HepG2 (cell line): ENCODE measurements at regions of chr2 and their contacts with region 1.

Region 1: GRCh38 chr2:9333591-9334171 is 89.6 kb downstream of the ITGB1BP1 start:
- DNase-seq: peak; percentile 84
- ATAC-seq: peak; percentile 55
- H3K4me3 ChIP-seq: no peak overlapping the region
- H3K27ac ChIP-seq: no peak overlapping the region
- H3K4me1 ChIP-seq: peaks cover 74% of the 10 kb centered on the region
- H3K27me3 ChIP-seq: no peaks in the 10 kb centered on the region
- CTCF ChIP-seq: peak; percentile 90
- EP300 ChIP-seq: no peak; a peak in 1 of 4 replicates
- POLR2A ChIP-seq: no peak
- RAD21 ChIP-seq: peak; percentile 88

Region 2: DNA sequence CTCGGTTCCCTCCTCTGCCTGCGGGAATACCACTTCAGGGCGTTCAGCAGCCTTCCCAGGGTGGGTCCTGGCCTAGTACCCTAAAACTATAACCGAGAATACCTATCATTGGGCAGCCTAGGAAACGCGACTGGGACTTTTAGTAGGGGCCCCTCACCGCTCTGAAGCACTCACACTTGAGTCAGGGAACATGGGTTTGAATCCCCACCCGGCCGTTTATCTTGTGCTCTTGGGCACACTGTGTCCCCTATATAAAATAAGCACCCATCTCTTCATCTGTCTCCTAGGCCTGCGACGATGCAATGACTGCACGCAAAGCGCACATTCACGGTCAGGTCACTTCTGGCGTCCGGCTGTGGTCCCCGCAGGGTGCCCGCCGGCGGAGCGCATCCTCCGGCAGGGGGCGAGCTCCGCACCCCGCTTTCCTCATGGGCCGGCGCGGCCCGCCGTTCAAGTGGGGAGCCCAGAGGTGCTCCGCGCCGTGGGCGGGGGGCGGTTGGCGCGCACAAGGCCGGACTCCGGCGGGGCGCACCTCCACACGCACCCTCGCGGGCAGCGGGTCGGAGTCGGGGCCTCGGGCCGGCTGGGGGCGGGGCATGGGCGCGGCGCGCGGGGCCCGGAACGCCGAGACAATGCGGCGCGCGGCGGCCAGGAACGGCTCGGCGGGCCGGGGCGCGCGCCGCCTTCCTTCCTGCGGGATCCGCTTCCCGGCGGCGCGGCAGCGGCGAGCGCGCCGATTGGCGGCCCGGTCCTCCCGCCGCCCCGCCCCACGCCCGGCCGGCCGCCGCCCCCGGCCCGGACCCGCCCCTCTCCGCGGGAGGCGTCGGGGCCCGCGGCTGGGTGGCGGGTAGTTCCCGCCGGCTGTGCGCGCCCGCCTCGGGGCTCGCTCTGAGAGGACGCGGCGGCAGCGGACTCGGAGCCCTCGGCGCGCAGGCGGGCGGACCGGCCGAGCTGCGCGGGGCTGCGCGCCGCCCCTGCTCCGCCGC is 127.4 kb before region 1 on chr2 and contains the start of gene ASAP2:
- CTCF ChIA-PET with region 1: interaction called, 4 read pairs
- POLR2A ChIA-PET with region 1: interaction called, 8 read pairs
- in situ Hi-C with region 1: loop called (anchors 10 kb)
- intact Hi-C with region 1: loop called (anchors 1 kb)
- DNase-seq: peak; percentile 59
- ATAC-seq: peak; percentile 79
- H3K4me3 ChIP-seq: peak within 1 kb of the TSS; percentile 87 to 96 (median 90)
- H3K27ac ChIP-seq: peak within 1 kb of the TSS; percentile 1
- H3K4me1 ChIP-seq: peaks cover 62% of the 10 kb centered on the region
- H3K27me3 ChIP-seq: no peaks in the 10 kb centered on the region; a peak in 1 of 5 replicates
- CTCF ChIP-seq: peak; percentile 89
- EP300 ChIP-seq: no peak
- POLR2A ChIP-seq: peak in 1 of 2 experiments; percentile 31; a peak in 1 of 4 replicates
- RAD21 ChIP-seq: peak; percentile 96
- total RNA-seq, gene ASAP2: 7.3 and 7.5 TPM in 2 replicates

Region 3: DNA sequence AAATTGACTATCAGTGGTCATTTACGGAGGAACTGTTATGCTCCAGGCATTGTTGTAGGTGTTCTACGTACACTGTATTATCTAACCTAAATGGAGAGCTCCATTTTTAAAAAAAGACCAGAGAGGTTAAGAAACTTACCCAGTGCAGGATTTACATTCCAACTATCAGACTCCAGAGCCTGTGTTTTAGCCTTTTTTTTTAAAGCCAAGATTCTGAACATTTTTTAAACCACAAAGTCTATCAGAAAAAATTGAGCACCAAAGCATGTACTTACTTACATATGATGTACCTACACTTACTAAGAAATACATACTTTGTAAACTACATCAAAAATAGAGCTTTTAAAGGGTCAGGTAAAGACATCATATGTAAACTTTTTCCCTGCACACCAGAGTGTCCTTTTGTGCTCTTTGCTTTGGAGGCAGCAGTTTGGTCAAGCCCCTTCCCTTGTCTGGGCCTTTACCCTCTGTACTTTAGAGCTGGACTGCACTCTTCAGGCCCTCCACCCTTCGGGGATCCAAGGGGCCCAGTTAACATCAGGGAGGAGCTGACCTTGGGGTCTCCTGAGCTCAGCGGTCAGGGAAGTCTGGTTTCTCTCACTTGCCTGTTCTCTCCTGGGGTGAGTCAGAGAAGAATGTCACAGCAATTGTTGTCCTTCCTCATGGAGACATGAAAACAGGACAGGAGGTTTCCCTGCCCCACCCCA is 31.3 kb after region 1 on chr2:
- CTCF ChIA-PET with region 1: no interaction called
- POLR2A ChIA-PET with region 1: interaction called, 18 read pairs
- in situ Hi-C with region 1: no loop called
- intact Hi-C with region 1: no loop called
- DNase-seq: peak; percentile 79
- ATAC-seq: peak; percentile 95
- H3K4me3 ChIP-seq: no peak overlapping the region
- H3K27ac ChIP-seq: peak overlapping the region; percentile 41
- H3K4me1 ChIP-seq: peaks cover 28% of the 10 kb centered on the region
- H3K27me3 ChIP-seq: no peaks in the 10 kb centered on the region
- CTCF ChIP-seq: no peak
- EP300 ChIP-seq: peak in 1 of 2 experiments; percentile 63; a peak in 1 of 4 replicates
- POLR2A ChIP-seq: no peak
- RAD21 ChIP-seq: no peak

Region 4: DNA sequence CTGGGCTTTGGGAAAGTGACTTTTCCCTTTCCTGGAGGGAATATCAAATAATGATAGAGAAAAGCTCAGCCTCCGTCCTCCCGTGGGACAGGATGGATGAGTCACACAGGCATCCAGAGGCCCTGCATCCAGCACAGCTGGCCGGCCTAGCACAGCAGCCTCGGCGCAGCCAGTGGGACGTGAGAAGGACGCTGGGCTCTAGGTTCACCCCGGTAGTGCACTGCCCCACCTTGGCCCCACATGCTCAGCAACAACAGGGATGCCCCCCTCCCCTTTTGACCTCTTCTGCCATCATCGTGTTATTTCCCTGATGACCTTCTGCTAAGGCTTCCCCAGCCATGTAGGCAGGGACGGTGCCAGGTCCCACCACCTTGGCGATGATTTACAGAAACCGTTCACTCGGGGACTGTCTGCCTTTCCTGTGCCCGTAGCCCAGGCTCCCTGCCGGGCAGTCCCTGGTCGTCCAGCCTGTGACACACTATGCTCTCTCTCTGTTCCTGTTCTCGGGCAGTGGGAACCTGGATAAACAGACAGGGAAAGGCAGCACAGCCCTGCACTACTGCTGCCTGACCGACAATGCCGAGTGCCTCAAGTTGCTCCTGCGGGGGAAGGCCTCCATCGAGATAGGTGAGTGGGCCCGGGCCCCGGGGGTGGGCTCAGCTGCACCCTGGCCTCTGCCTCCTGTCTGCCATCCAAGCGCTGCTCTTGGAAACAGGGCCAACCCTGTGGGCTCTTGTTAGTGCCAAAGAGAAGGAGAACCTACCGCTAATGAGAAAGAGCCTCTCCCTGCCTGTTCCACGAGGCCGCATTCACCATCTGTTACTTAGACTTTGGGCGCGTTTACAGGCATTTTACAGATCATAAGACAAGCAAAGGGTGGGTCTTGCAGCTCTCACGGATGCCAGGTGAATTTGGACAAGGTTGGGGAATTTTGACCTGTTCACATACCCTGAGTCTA is 45.0 kb after region 1 on chr2:
- CTCF ChIA-PET with region 1: no interaction called
- POLR2A ChIA-PET with region 1: interaction called, 18 read pairs
- in situ Hi-C with region 1: no loop called
- intact Hi-C with region 1: no loop called
- DNase-seq: no peak
- ATAC-seq: peak; percentile 29; the same call in 1 of the 3 replicates
- H3K4me3 ChIP-seq: no peak overlapping the region
- H3K27ac ChIP-seq: no peak overlapping the region
- H3K4me1 ChIP-seq: peaks cover 46% of the 10 kb centered on the region
- H3K27me3 ChIP-seq: no peaks in the 10 kb centered on the region
- CTCF ChIP-seq: no peak
- EP300 ChIP-seq: no peak
- POLR2A ChIP-seq: no peak
- RAD21 ChIP-seq: no peak

Region 5: DNA sequence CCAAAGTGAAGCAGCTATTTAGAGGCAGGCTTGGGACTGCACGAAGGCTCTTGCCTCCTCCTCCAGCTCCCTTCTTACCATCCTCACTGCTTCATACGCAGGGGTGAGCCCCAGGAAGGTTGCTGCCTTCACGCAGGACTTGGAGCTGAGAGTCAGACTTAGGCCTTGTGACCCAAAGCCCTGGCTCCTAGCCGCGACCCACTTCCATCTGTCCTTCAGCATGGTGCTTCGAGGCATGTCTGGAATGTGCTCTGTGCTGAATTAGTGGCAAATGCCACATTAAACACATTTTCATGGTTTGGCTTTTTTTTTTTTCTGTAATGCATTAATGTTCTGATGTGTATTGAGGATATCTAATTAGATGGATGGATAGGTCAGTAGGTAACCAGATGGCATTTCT is 52.2 kb after region 1 on chr2:
- CTCF ChIA-PET with region 1: no interaction called
- POLR2A ChIA-PET with region 1: interaction called, 21 read pairs
- in situ Hi-C with region 1: no loop called
- intact Hi-C with region 1: loop called (anchors 5 kb)
- DNase-seq: no peak
- ATAC-seq: no peak
- H3K4me3 ChIP-seq: no peak overlapping the region
- H3K27ac ChIP-seq: peak overlapping the region; percentile 54
- H3K4me1 ChIP-seq: peaks cover 72% of the 10 kb centered on the region
- H3K27me3 ChIP-seq: no peaks in the 10 kb centered on the region
- CTCF ChIP-seq: no peak
- EP300 ChIP-seq: no peak
- POLR2A ChIP-seq: no peak
- RAD21 ChIP-seq: no peak

Region 6: DNA sequence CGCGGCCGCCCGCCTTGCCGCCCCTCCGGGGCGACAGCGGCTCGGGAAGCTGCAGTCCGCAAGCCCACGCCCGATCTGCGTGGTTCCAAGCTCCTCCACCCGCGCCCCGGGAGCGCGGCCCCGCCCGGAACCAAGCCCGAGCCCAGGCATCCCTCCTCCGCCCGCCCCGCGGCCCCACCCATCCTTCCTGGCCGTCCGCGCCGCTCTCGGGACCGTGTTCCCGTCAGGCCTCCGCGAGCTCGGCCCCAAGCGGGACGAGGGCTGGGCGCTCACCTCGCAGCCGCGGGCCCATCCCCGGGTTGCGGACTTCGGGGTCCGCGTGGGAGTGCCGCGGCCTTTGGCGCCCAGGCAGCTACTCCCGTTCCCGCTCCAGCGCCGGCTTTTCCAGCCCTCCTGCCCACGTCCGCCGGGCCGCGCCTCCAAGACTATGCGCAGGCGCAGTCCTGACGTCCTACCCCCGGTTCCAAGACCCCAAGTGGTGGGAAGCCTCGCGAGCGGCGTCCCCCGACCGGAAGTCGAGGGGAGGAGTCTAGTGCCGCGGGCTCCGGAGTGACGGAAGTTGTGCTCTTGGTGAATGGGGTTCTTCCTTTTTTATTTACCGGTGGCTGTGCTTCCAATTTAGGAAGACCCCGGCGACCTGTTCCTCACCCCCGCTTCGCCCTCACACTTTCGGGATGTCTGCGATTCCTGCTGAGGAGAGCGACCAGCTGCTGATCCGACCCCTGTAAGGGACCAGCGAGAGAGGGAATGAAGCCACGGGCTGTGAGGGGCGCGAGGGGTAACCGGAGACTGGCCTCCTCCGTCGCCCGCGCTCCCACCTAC is 89.6 kb after region 1 on chr2 and contains the starts of genes CPSF3 and ITGB1BP1:
- CTCF ChIA-PET with region 1: no interaction called
- POLR2A ChIA-PET with region 1: interaction called, 17 read pairs
- in situ Hi-C with region 1: no loop called
- intact Hi-C with region 1: loop called (anchors 1 kb)
- DNase-seq: peak; percentile 98
- ATAC-seq: peak; percentile 87
- H3K4me3 ChIP-seq: peak within 1 kb of the TSS; percentile 80 to 97 (median 86)
- H3K27ac ChIP-seq: peak within 1 kb of the TSS; percentile 75
- H3K4me1 ChIP-seq: peaks cover 57% of the 10 kb centered on the region
- H3K27me3 ChIP-seq: no peaks in the 10 kb centered on the region; a peak in 1 of 5 replicates
- CTCF ChIP-seq: peak; percentile 45; the same call in 1 of the 2 replicates
- EP300 ChIP-seq: 0 out of 4 replicates have a peak, but pooled peaks of 1 of the 2 experiments have one; percentile 5
- POLR2A ChIP-seq: peak; percentile 54 to 75; a peak in 3 of 4 replicates
- RAD21 ChIP-seq: peak; percentile 73
- total RNA-seq, gene CPSF3: 93.0 and 128 TPM in 2 replicates
- total RNA-seq, gene ITGB1BP1: 108 and 125 TPM in 2 replicates